PC-9 (cell line): ENCODE measurements at regions of chr2 and their contacts with region 1.

Region 1: GRCh38 chr2:26887151-26887550 is 39.2 kb downstream of the DPYSL5 start:
- DNase-seq: no peak
- H3K4me3 ChIP-seq: no peak overlapping the region
- H3K27ac ChIP-seq: no peak overlapping the region
- H3K4me1 ChIP-seq: no peaks in the 10 kb centered on the region
- H3K27me3 ChIP-seq: peaks cover 75% of the 10 kb centered on the region
- CTCF ChIP-seq: no peak

Region 2: DNA sequence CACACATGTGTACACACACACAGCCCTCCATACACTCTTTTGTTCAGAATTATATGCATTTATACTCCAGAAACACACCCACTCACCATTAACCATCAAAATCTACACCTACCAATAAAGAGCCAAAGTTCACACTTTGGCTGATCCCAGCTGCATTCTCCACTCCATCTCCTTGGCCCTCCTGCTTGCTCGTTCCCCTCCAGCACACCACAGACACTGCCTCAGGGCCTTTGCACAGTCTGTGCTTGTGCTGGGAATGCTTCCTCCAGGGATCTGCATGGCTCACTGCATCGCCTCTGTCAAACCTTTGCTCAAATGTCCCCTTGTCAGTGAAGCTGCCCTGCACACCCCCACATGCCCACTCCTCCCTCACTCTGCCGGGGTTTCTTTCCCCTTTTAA is 1764.8 kb before region 1 on chr2:
- CTCF ChIA-PET with region 1: no interaction called
- POLR2A ChIA-PET with region 1: interaction called, 14 read pairs
- intact Hi-C with region 1: no loop called
- DNase-seq: no peak
- H3K4me3 ChIP-seq: no peak overlapping the region
- H3K27ac ChIP-seq: no peak overlapping the region
- H3K4me1 ChIP-seq: no peaks in the 10 kb centered on the region
- H3K27me3 ChIP-seq: peaks cover 36% of the 10 kb centered on the region
- CTCF ChIP-seq: no peak

Region 3: GRCh38 chr2:26196683-26197418 is 690.3 kb before region 1 on chr2:
- CTCF ChIA-PET with region 1: no interaction called
- POLR2A ChIA-PET with region 1: no interaction called
- intact Hi-C with region 1: no loop called
- DNase-seq: no peak
- H3K4me3 ChIP-seq: no peak overlapping the region
- H3K27ac ChIP-seq: no peak overlapping the region
- H3K4me1 ChIP-seq: no peaks in the 10 kb centered on the region
- H3K27me3 ChIP-seq: no peaks in the 10 kb centered on the region
- CTCF ChIP-seq: no peak